Panc1 (cell line): ENCODE measurements at regions of chr15 and their contacts with region 1.

Region 1: GRCh38 chr15:92053840-92054239 is 200.3 kb downstream of the SLCO3A1 start:
- DNase-seq: no peak
- ATAC-seq: peak; percentile 58; the same call in 1 of the 2 replicates
- H3K4me3 ChIP-seq: no peak overlapping the region
- H3K27ac ChIP-seq: no peak overlapping the region
- H3K4me1 ChIP-seq: no peaks in the 10 kb centered on the region
- H3K27me3 ChIP-seq: no peaks in the 10 kb centered on the region
- CTCF ChIP-seq: peak; percentile 64

Region 2: DNA sequence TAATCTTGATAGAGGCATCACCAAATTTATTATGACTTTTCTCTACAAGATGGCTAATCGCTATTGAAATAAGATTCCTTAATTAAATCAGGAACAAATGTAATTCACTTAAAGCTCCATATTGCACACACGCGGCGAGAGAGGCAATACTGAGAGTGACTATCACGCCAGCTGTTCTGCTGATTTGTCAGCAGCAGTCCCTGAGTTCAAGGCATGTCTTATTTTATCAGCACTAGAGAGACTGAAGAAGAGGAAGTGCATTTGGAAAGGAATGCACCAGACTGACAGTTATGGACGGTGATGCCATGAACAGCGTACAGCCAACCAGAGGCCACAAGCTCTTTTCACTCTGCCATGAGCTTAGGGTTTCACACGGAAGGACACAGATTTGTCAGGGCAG is 283.9 kb before region 1 on chr15:
- CTCF ChIA-PET with region 1: no interaction called
- POLR2A ChIA-PET with region 1: no interaction called
- in situ Hi-C with region 1: no loop called
- intact Hi-C with region 1: no loop called
- DNase-seq: no peak
- ATAC-seq: no peak
- H3K4me3 ChIP-seq: no peak overlapping the region
- H3K27ac ChIP-seq: no peak overlapping the region
- H3K4me1 ChIP-seq: no peaks in the 10 kb centered on the region
- H3K27me3 ChIP-seq: no peaks in the 10 kb centered on the region; the same call in 1 of the 2 replicates
- CTCF ChIP-seq: no peak

Region 3: GRCh38 chr15:91973481-91973880 is 80.4 kb before region 1 on chr15:
- CTCF ChIA-PET with region 1: no interaction called
- POLR2A ChIA-PET with region 1: no interaction called
- in situ Hi-C with region 1: no loop called
- intact Hi-C with region 1: no loop called
- DNase-seq: no peak
- ATAC-seq: no peak
- H3K4me3 ChIP-seq: no peak overlapping the region
- H3K27ac ChIP-seq: no peak overlapping the region
- H3K4me1 ChIP-seq: no peaks in the 10 kb centered on the region; the same call in 1 of the 2 replicates
- H3K27me3 ChIP-seq: no peaks in the 10 kb centered on the region
- CTCF ChIP-seq: peak; percentile 29; the same call in 1 of the 2 replicates

Region 4: DNA sequence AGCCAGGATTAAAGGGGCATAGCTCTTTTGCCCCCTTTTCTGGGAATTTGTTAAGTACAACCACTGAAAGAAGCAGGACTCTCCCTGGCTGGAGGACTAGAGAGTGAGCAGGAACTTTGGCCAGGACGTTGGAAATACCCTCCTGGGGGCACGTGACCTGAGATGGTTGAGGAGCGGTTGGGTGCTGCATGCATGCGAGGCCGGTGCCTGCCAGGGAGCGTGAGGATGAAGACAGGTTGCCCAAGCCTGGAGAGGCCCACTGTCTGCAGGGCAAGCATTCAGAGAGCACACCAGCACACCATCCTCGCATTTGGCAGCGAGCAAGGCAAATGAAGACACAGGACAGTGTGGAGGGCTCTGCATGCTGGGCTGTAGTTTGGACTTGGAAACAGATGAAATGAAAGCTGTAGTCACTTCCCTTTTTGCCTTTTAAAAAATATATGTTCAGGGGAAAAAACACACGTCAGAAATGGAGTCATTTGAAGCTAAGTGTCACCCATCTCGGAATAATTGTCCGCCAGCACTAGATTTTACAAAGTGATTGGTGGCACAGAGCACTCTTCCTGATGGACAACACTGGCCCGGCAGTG is 17.3 kb after region 1 on chr15:
- CTCF ChIA-PET with region 1: interaction called, 11 read pairs
- POLR2A ChIA-PET with region 1: no interaction called
- in situ Hi-C with region 1: no loop called
- intact Hi-C with region 1: no loop called
- DNase-seq: no peak
- ATAC-seq: no peak
- H3K4me3 ChIP-seq: no peak overlapping the region
- H3K27ac ChIP-seq: no peak overlapping the region
- H3K4me1 ChIP-seq: peaks cover 4% of the 10 kb centered on the region; the same call in 1 of the 2 replicates
- H3K27me3 ChIP-seq: no peaks in the 10 kb centered on the region
- CTCF ChIP-seq: no peak

Region 5: DNA sequence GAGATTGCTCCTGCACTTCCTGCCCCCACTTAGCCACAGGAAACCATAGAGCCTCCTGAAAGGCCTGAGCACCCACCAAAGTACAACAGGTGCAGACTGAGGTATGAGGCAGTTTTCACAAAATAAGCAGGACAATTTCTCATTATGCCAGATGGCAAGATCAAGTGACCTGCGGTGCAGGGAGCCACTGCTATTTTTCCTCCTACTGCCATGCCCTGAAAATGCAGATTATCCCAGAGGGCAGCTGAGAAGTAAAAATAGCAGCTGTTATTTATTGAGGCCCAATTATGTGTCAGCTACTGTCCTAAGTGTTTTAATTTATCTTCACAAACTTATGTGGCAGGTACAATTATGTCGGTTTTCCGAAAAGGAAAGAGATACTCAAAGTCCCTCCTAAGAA is 130.3 kb after region 1 on chr15:
- CTCF ChIA-PET with region 1: no interaction called
- POLR2A ChIA-PET with region 1: no interaction called
- in situ Hi-C with region 1: no loop called
- intact Hi-C with region 1: no loop called
- DNase-seq: no peak
- ATAC-seq: no peak
- H3K4me3 ChIP-seq: no peak overlapping the region
- H3K27ac ChIP-seq: no peak overlapping the region
- H3K4me1 ChIP-seq: no peaks in the 10 kb centered on the region
- H3K27me3 ChIP-seq: no peaks in the 10 kb centered on the region; the same call in 1 of the 2 replicates
- CTCF ChIP-seq: no peak

Region 6: DNA sequence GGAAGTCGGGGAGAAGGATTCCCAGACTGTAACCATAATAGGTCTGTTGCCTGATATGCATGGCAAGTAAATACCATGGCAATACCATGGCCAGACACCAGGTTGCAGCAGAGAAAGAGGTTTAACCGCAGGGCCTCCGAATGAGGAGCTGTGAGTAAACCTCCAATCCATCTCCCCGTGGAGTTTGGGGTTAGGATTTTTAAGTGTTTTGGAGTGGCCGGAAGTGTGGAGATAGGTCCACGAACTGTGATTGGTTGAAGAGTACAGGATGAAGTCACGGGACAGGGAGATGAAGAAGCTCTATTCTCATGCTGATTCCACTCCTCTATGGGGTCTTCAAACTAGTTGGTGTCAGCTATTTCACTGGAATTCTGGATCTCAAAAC is 467.8 kb after region 1 on chr15:
- CTCF ChIA-PET with region 1: no interaction called
- POLR2A ChIA-PET with region 1: no interaction called
- in situ Hi-C with region 1: no loop called
- intact Hi-C with region 1: no loop called
- DNase-seq: peak; percentile 47
- ATAC-seq: peak; percentile 98
- H3K4me3 ChIP-seq: no peak overlapping the region
- H3K27ac ChIP-seq: no peak overlapping the region
- H3K4me1 ChIP-seq: no peaks in the 10 kb centered on the region
- H3K27me3 ChIP-seq: no peaks in the 10 kb centered on the region
- CTCF ChIP-seq: peak; percentile 81